ENCODE measurements at regions of chr4 and their contacts with region 1.

Region 1: GRCh38 chr4:6761649-6762602 is 20.6 kb upstream of the KIAA0232 start:
- DNase-seq: peak; percentile 17 to 83 (median 72)
- H3K4me3 ChIP-seq: peak overlapping the region in 40 of 59 donors; percentile 7 to 55 (median 39)
- H3K27ac ChIP-seq: peak overlapping the region in 56 of 59 donors; percentile 2 to 90 (median 78)
- H3K27me3 ChIP-seq: no peaks in the 10 kb centered on the region
- CTCF ChIP-seq: peak in 10 of 56 donors; percentile 12 to 28 (median 17)

Region 2: GRCh38 chr4:4981427-4981826 is 1780.5 kb before region 1 on chr4:
- intact Hi-C with region 1: no loop called
- DNase-seq: no peak
- H3K4me3 ChIP-seq: no peak overlapping the region
- H3K27ac ChIP-seq: no peak overlapping the region
- H3K27me3 ChIP-seq: no peaks in the 10 kb centered on the region
- CTCF ChIP-seq: no peak

Region 3: GRCh38 chr4:6727081-6727942 is 34.6 kb before region 1 on chr4:
- intact Hi-C with region 1: loop called (anchors 5 kb)
- DNase-seq: peak; percentile 53 to 93 (median 90)
- H3K4me3 ChIP-seq: peak overlapping the region in 51 of 59 donors; percentile 2 to 55 (median 30)
- H3K27ac ChIP-seq: peak overlapping the region; percentile 49 to 97 (median 92)
- H3K27me3 ChIP-seq: no peaks in the 10 kb centered on the region
- CTCF ChIP-seq: peak in 20 of 56 donors; percentile 6 to 41 (median 16)

Region 4: DNA sequence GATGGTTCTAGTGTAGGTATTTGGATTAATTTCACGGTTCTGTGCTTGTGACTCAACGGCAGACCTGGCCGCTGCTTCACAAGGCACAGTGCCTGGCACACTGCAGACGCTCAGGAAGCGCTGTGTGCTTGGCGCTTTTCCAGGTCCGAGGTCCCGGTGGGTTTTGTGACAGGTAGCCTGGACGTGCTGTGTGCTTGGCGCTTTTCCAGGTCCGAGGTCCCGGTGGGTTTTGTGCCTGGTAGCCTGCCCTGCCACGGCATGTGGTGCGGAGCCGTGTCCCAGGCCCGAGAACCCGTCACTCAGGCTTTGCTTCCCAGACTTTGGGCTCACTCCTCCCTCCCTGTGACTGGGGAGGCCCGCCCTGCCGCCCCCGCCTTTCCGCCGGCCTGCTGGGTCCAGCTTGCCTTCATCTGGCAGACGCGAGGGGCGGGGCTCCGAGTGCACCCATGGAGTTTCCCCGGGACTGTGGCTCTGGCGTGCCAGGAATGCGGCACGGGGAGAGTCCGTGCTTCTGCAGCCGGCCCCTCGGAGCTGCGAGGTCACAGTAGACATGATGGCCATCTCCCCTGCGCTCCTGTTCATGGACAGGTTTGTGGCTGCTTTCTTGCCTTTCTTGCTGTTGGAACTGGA is 191.9 kb after region 1 on chr4:
- intact Hi-C with region 1: no loop called
- DNase-seq: peak in 5 of 10 donors; percentile 47 to 74 (median 63)
- H3K4me3 ChIP-seq: peak overlapping the region in 32 of 59 donors; percentile 4 to 47 (median 29)
- H3K27ac ChIP-seq: peak overlapping the region in 1 of 59 donors; percentile 6
- H3K27me3 ChIP-seq: no peaks in the 10 kb centered on the region
- CTCF ChIP-seq: no peak

Measured in dorsolateral prefrontal cortex (tissue), 120 donors.